Heart left ventricle (tissue), 16 donors: ENCODE measurements at regions of chr2 and their contacts with region 1.

Region 1: DNA sequence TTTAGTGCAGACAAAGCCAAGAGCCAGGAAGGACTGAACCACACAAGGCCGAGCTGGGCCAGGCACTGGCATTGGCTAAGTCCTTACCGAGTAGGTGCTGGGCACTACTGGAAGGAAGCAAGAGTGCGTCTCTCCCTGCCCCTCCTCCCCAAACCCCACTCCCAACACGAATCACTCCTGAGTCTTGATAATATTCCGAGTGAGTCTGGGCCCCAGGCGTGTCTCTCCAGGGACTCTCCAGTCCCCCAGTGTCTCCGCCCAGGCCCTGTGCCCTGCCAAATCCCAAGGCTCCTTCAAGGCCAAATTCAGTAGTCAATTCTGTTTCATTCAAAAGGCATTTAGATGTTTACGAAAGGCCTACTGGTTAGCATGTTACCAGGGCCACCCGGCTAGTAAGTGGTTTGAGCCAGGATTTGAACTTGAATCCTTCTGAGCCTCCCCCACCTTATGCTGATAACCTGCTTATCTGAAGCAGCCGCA is 82.8 kb downstream of the GLI2 start:
- DNase-seq: peak in 2 of 5 donors; percentile 14 to 28
- ATAC-seq: peak in 1 of 4 donors; percentile 16
- H3K4me3 ChIP-seq: no peak overlapping the region
- H3K27ac ChIP-seq: peak overlapping the region in 1 of 12 donors; percentile 36
- H3K4me1 ChIP-seq: peaks cover 0 to 10% (median 0%) of the 10 kb centered on the region in 12 donors
- H3K27me3 ChIP-seq: no peaks in the 10 kb centered on the region
- CTCF ChIP-seq: no peak
- POLR2A ChIP-seq: no peak

Region 2: DNA sequence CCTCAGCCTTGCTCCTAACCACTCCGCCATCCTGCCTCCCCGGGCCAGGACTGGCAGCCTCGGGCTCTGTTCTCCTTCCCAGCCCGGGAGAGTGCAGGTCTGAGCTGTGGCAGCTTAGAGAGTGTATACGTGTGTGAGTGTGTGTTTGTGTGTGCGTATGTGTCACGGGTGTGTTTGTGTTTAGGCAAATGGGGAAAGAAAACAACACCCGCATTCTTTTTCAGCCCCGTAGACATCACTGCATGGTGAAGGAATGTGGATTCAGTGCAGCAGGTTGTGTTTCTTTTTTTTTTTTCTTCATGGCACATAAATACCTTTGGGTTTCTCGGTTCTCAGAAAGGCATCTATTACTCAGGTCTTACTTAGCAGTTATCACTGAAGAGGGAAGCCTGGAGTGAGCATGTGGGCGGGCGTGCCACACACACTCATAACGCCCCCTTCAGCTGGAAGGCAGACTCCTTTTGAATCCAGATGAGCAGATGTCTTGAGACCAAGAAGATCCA is 38.6 kb before region 1 on chr2:
- intact Hi-C with region 1: no loop called
- DNase-seq: no peak
- ATAC-seq: no peak
- H3K4me3 ChIP-seq: no peak overlapping the region
- H3K27ac ChIP-seq: no peak overlapping the region
- H3K4me1 ChIP-seq: peaks cover 0 to 19% (median 9%) of the 10 kb centered on the region in 12 donors
- H3K27me3 ChIP-seq: peaks cover 0 to 7% (median 0%) of the 10 kb centered on the region in 9 donors
- CTCF ChIP-seq: no peak
- POLR2A ChIP-seq: no peak

Region 3: DNA sequence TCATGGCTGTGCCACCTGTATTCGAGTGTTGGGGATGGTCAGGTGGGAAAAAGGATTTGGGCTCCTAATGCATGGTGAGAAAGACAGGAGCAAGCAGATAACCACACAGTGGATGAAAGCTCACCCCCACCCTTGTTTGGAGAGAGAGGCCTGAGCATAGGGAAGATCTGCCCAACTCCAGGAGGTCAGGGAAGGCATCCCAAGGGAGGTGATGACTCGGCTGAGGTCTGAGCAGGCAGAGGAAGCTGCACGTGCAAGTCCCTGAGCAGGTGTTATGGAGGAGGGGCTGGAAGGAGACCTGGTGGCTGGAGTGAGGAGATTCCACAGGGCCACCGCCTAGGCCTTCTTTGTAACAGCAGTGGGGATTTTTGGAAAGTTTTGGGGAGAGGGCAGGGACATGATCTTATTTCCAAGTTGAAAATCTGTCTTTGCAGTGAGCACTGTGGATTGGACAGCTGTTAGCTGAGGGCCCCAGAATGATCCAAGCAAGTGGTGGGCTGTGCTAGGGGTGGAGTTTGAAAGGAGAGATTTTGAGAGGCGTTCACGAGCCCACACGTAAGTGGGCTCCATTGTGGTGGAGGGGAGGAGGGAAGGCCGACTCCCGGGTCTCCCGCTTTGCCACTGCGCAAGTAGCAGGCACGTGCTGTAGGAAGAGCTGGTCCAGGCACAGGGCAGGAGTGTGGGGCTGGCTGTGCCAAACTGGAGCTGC is 145.7 kb after region 1 on chr2:
- intact Hi-C with region 1: loop called in 1 of 10 experiments (anchors 10 kb)
- DNase-seq: no peak
- ATAC-seq: no peak
- H3K4me3 ChIP-seq: no peak overlapping the region
- H3K27ac ChIP-seq: no peak overlapping the region
- H3K4me1 ChIP-seq: peaks cover 0 to 5% (median 0%) of the 10 kb centered on the region in 12 donors
- H3K27me3 ChIP-seq: no peaks in the 10 kb centered on the region
- CTCF ChIP-seq: no peak
- POLR2A ChIP-seq: no peak